A673 (cell line): ENCODE measurements at regions of chr22 and their contacts with region 1.

Region 1: DNA sequence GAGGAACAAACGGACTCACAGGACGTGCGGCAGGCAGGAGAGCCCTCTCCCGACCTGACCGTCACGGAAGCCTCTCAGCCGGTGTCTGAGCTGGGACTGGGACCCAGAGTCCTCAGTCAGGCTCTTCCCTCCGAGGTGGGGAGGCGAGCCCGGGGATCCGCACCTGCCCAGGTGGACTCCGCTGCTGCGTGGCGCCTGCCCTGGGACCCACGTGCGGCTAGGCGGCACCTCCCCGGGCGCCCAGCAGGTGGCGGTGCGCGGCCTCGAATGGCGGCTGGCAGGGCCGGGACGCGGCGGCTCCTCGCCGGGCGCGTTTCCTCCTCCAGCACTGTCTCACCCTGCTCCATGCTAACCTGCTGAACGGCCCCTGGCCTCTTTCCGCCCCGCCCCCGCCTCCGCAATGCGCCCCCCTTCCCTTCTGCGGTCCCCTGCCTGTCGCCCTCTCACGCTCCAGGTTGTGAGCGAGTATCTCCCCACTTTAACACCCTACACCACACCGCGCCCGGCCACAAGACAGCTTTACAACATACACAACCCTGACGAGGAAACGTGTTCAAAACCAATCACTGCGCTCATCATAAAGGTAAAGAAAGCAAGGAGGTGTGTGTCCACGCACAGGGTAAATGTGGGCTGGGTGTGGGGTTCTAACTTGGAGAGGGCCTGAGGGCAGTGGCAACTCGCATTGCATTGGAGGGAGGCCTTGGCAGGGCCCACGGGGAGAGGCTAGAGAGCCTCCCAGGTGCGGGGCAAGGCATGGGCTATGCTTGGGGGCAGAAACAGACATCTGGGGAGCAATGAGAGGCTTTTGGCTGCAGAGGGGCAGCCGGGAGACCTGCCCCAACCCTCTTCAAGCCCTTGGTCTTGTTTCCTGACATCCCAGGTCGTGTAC is 25.9 kb upstream of the ATXN10 start:
- DNase-seq: peak; percentile 73
- H3K4me3 ChIP-seq: peak overlapping the region; percentile 41
- H3K27ac ChIP-seq: no peak overlapping the region
- H3K4me1 ChIP-seq: peaks cover 3% of the 10 kb centered on the region
- H3K27me3 ChIP-seq: no peaks in the 10 kb centered on the region
- CTCF ChIP-seq: peak; percentile 75

Region 2: GRCh38 chr22:45863981-45864751 is 218.4 kb after region 1 on chr22:
- CTCF ChIA-PET with region 1: no interaction called
- POLR2A ChIA-PET with region 1: no interaction called
- intact Hi-C with region 1: loop called (anchors 5 kb)
- DNase-seq: peak; percentile 82
- H3K4me3 ChIP-seq: no peak overlapping the region
- H3K27ac ChIP-seq: no peak overlapping the region
- H3K4me1 ChIP-seq: no peaks in the 10 kb centered on the region
- H3K27me3 ChIP-seq: peaks cover 33% of the 10 kb centered on the region
- CTCF ChIP-seq: peak; percentile 95

Region 3: GRCh38 chr22:45905924-45906865 is 260.4 kb after region 1 on chr22:
- CTCF ChIA-PET with region 1: interaction called, 11 read pairs
- POLR2A ChIA-PET with region 1: no interaction called
- intact Hi-C with region 1: no loop called
- DNase-seq: no peak
- H3K4me3 ChIP-seq: no peak overlapping the region
- H3K27ac ChIP-seq: no peak overlapping the region
- H3K4me1 ChIP-seq: no peaks in the 10 kb centered on the region
- H3K27me3 ChIP-seq: peaks cover 27% of the 10 kb centered on the region
- CTCF ChIP-seq: no peak

Region 4: GRCh38 chr22:45977551-45978274 is 331.9 kb after region 1 on chr22:
- CTCF ChIA-PET with region 1: no interaction called
- POLR2A ChIA-PET with region 1: interaction called, 20 read pairs
- intact Hi-C with region 1: no loop called
- DNase-seq: no peak
- H3K4me3 ChIP-seq: peak overlapping the region; percentile 54
- H3K27ac ChIP-seq: no peak overlapping the region
- H3K4me1 ChIP-seq: peaks cover 5% of the 10 kb centered on the region
- H3K27me3 ChIP-seq: peaks cover 56% of the 10 kb centered on the region
- CTCF ChIP-seq: no peak